Heart left ventricle (tissue), 16 donors: ENCODE measurements at regions of chr12 and their contacts with region 1.

Region 1: DNA sequence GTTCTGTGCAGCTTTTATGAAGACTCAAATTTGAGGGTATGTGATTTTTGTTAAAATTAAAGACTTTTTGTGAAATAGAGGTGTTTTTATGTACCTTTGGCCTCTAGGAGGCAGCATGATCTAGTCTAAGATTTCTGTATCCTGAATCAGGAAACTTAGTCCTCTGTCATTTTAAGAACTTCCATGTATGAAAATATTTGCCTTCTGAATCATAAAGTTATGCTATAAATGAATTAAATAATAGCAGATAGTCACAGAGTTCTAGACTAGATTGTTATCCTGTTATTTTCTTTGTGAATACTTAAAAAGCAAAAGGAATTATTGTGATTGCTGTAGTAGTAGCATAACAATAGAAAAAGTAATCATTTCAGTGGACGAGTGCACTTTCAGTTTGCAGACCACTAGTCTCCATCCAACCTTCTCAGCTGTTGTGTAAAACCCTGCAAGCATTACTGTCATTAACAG is 56.3 kb downstream of the FGD4 start:
- DNase-seq: peak in 2 of 5 donors; percentile 28 to 38
- ATAC-seq: peak in 3 of 4 donors; percentile 49 to 78 (median 60)
- H3K4me3 ChIP-seq: peak overlapping the region in 10 of 12 donors; percentile 17 to 58 (median 44)
- H3K27ac ChIP-seq: peak overlapping the region; percentile 22 to 75 (median 57)
- H3K4me1 ChIP-seq: peaks cover 7 to 61% (median 44%) of the 10 kb centered on the region in 12 donors
- H3K27me3 ChIP-seq: no peaks in the 10 kb centered on the region
- CTCF ChIP-seq: peak; percentile 49 to 85 (median 70)
- POLR2A ChIP-seq: no peak

Region 2: DNA sequence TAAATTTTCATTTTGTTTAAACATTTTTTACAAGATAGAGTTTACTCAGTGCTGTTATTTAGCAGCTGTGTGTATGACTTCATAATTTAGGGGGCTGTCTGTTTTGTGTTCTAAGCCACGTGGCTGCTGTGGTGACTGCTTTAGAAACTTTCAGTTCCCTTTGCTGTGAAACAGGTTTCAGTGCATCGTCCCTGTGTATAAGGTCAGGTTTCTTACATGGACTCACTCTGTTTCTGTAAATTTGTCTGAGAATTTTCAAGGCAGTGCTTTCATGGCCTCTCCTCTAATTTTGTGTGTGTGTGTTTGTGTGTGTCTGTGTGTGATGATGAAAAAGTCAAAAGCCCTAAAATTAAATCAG is 316.6 kb before region 1 on chr12:
- intact Hi-C with region 1: no loop called
- DNase-seq: no peak
- ATAC-seq: peak in 3 of 4 donors; percentile 42 to 59 (median 57)
- H3K4me3 ChIP-seq: peak overlapping the region in 10 of 12 donors; percentile 27 to 59 (median 46)
- H3K27ac ChIP-seq: peak overlapping the region in 3 of 12 donors; percentile 28 to 52 (median 42)
- H3K4me1 ChIP-seq: peaks cover 0 to 24% (median 6%) of the 10 kb centered on the region in 12 donors
- H3K27me3 ChIP-seq: no peaks in the 10 kb centered on the region
- CTCF ChIP-seq: no peak
- POLR2A ChIP-seq: no peak

Region 3: DNA sequence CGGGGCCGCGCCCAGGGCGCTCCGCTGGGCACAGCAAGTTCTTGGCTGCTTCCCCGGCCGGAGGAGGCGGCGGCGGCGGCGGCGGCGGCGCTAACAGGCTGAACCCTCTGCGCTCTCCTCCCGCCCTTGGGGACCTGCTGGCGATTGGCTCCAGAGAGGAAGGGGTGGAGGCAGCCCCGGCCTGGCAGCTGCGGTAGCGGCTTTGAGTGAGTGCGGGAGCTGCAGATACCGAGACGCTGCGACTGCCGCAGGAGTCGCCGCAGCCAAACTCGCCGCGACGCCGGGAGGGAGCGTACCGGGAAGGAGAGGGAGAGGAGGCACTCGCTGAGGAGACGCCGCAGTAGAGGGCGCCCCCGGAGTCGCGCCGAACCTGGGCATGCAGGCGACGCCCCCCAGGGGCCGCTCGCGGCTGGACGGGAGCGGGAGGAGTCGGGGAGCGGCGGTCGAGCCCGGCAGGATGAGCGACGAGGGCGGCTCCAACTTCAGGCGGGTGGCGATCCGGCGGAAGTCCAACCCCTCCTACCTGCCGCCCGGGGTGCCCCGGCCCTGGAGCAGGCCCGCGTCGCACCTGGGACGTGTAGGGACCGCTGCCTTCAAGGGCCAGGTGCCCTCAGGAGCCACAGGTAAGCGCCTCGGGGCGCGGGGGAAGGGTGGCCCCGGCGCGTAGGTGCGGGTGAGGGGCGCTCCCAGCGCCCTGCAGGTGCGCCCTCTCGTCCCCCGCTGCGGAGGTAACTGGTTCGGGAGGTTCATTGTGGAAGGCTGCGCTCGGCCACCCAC is 56.1 kb before region 1 on chr12 and contains the start of gene FGD4:
- intact Hi-C with region 1: loop called in 2 of 10 experiments (anchors 2 to 5 kb)
- DNase-seq: peak; percentile 85 to 95 (median 91)
- ATAC-seq: peak; percentile 96 to 98 (median 98)
- H3K4me3 ChIP-seq: peak within 1 kb of the TSS; percentile 44 to 98 (median 89)
- H3K27ac ChIP-seq: peak within 1 kb of the TSS; percentile 62 to 89 (median 80)
- H3K4me1 ChIP-seq: peaks cover 0 to 30% (median 7%) of the 10 kb centered on the region in 12 donors
- H3K27me3 ChIP-seq: peaks cover 0 to 7% (median 0%) of the 10 kb centered on the region in 9 donors
- CTCF ChIP-seq: peak; percentile 26 to 67 (median 48)
- POLR2A ChIP-seq: peak in 1 of 2 donors; percentile 88
- total RNA-seq, gene FGD4: 7.1 to 36.8 (median 28.5) TPM

Region 4: DNA sequence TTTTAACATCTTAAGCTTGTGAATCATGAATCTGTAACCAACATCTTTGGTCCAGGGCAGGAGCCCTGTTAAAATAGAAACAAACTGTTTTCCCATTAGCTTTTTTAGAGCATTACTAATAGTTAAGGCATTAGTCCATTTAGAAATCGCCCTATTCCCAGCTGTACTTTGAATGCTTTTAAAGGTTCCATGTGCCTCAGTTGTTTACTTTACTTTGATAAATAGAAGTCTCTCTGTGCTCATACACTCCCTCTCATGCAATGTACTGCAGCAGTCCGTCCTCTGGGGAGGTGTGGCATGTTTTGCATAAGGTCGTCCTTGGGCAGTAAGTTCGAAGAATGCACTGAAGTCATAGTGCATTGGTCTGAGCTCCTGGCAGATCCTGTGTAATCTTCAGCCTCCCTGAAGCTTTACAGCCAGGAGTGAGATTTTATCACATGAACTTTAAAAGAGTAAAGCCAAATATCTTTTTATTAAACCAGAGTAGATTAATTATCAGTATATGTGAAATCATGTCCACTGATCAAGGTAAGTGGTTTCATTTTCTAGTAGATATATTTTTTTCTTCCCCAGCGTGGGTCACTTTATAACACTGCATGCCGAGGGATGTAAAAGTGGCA is 78.4 kb after region 1 on chr12:
- intact Hi-C with region 1: loop called in 4 of 10 experiments (anchors 2 to 5 kb)
- DNase-seq: peak in 4 of 5 donors; percentile 51 to 60 (median 58)
- ATAC-seq: peak; percentile 82 to 92 (median 87)
- H3K4me3 ChIP-seq: peak overlapping the region; percentile 12 to 64 (median 54)
- H3K27ac ChIP-seq: peak overlapping the region; percentile 50 to 85 (median 72)
- H3K4me1 ChIP-seq: peaks cover 0 to 70% (median 43%) of the 10 kb centered on the region in 12 donors
- H3K27me3 ChIP-seq: no peaks in the 10 kb centered on the region
- CTCF ChIP-seq: no peak
- POLR2A ChIP-seq: peak in 1 of 2 donors; percentile 50

Region 5: DNA sequence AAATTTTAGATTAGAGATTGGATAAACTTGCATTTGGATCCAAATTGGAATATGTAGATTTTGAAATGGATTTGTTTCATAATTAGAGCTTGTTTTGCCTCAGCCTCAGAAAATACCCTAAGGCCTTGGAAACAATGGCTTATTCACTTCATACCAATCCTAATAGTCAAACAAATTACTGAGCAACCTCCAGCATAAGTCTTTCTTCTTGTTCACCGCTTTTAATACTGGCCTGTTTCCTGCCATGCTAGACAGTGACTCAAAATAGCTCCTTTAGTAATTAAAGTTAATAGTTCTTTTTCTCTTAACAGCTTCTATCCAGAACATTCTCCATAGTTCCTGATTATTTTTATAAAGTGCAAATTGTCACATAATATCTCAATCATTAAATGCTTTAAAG is 112.6 kb after region 1 on chr12:
- intact Hi-C with region 1: loop called in 2 of 10 experiments (anchors 10 kb)
- DNase-seq: no peak
- ATAC-seq: peak in 3 of 4 donors; percentile 57 to 70 (median 59)
- H3K4me3 ChIP-seq: no peak overlapping the region
- H3K27ac ChIP-seq: peak overlapping the region in 10 of 12 donors; percentile 9 to 71 (median 51)
- H3K4me1 ChIP-seq: peaks cover 6 to 63% (median 42%) of the 10 kb centered on the region in 12 donors
- H3K27me3 ChIP-seq: no peaks in the 10 kb centered on the region
- CTCF ChIP-seq: no peak
- POLR2A ChIP-seq: no peak

Region 6: GRCh38 chr12:32659908-32660440 is 204.3 kb after region 1 on chr12:
- intact Hi-C with region 1: loop called (anchors 1 to 5 kb)
- DNase-seq: no peak
- ATAC-seq: no peak
- H3K4me3 ChIP-seq: no peak overlapping the region
- H3K27ac ChIP-seq: peak overlapping the region in 10 of 12 donors; percentile 4 to 69 (median 48)
- H3K4me1 ChIP-seq: peaks cover 0 to 17% (median 7%) of the 10 kb centered on the region in 12 donors
- H3K27me3 ChIP-seq: no peaks in the 10 kb centered on the region
- CTCF ChIP-seq: no peak
- POLR2A ChIP-seq: no peak

Region 7: DNA sequence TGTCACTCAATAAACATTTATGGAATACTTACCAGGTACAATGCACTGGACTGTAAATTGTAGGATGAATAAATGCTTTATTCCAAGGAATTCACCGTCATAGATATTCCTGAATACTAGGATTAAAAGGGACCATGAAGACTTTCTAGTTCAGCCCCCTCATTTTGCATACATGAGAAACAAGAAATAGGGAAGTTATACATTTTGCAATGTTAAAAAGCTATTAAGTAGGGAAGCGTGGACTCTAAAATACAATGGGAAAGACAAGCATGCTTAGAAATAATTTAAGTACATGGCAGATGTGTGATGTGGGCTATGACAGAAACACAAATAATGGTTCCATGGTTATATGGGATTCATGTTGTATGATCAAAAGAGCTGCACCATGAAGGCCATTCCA is 1073.4 kb after region 1 on chr12:
- intact Hi-C with region 1: no loop called
- DNase-seq: no peak
- ATAC-seq: no peak
- H3K4me3 ChIP-seq: no peak overlapping the region
- H3K27ac ChIP-seq: peak overlapping the region in 1 of 12 donors; percentile 72
- H3K4me1 ChIP-seq: peaks cover 0 to 6% (median 0%) of the 10 kb centered on the region in 12 donors
- H3K27me3 ChIP-seq: no peaks in the 10 kb centered on the region
- CTCF ChIP-seq: no peak
- POLR2A ChIP-seq: no peak